ENCODE measurements at regions of chr10 and their contacts with region 1.

Region 1: GRCh38 chr10:57351076-57351475 is 916.6 kb downstream of the IPMK start:
- DNase-seq: no peak
- ATAC-seq: no peak
- H3K4me3 ChIP-seq: no peak overlapping the region
- H3K4me3 Mint-ChIP-seq: no peak overlapping the region
- H3K27ac ChIP-seq: no peak overlapping the region
- H3K27ac Mint-ChIP-seq: no peak overlapping the region
- H3K4me1 ChIP-seq: no peaks in the 10 kb centered on the region
- H3K4me1 Mint-ChIP-seq: no peaks in the 10 kb centered on the region
- H3K27me3 ChIP-seq: no peaks in the 10 kb centered on the region
- H3K27me3 Mint-ChIP-seq: no peaks in the 10 kb centered on the region
- CTCF ChIP-seq: no peak

Region 2: DNA sequence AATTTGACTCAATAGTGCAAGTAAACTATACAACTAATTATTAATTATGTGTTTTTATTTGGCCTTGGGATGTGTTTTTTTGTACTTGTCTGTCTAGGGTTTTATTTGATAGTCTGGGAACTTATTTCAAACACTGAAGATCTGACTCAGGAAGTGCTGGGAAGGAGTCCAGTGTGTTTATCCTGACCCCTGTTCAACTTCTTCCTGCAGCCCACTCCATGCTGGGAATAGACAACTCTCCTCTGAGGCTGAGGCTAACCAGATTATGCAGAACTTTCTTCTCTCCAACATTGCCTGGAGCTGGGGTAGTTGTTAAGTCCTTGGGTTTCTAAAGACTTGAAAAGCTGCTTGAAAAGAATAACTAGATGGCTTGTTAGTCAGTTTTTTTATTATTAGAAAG is 924.8 kb after region 1 on chr10:
- CTCF ChIA-PET with region 1: no interaction called
- POLR2A ChIA-PET with region 1: no interaction called
- intact Hi-C with region 1: loop called in 1 of 2 experiments (anchors 5 kb)
- DNase-seq: no peak
- ATAC-seq: no peak
- H3K4me3 ChIP-seq: no peak overlapping the region
- H3K4me3 Mint-ChIP-seq: no peak overlapping the region
- H3K27ac ChIP-seq: no peak overlapping the region
- H3K27ac Mint-ChIP-seq: no peak overlapping the region
- H3K4me1 ChIP-seq: no peaks in the 10 kb centered on the region
- H3K4me1 Mint-ChIP-seq: peaks cover 4% of the 10 kb centered on the region
- H3K27me3 ChIP-seq: no peaks in the 10 kb centered on the region
- H3K27me3 Mint-ChIP-seq: no peaks in the 10 kb centered on the region
- CTCF ChIP-seq: no peak